Naive thymus-derived CD4-positive, alpha-beta T cell (primary cell): ENCODE measurements at regions of chr16 and their contacts with region 1.

Region 1: DNA sequence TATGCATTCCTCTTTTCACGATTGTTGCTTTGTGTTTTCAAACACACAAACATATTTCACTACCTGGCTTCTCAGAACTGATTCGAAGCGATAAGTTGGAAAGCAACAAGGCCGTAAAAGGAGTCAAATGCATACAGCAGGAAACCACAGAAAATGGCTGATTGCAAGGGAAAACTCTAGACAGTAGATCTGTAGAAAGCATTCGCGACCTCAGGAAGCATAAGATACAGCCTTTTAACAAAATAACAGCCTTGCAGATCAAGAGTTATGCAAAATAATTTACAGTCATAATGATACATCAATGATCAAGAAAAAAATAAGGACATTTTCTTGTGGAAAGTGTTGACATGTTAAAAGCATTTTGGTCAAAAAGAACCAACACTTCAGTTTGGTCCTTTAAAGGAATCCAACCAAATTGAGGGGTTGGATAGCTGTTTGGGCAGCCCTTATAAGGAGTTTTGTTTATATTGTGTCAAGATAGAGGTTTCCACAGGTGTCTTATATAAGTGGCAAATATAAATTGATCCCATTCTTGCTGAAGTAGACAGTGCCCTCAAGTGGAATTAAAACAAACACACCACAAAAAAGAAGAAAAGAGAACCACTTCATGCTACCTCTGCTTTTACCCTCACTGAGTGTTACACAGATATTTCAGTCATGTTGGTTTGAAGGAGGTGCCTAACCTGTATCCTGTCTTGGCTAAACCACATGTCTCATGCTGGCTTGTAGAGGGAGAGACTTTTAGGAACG is 5.5 kb downstream of the CYLD start:
- DNase-seq: peak in 7 of 9 donors; percentile 52 to 80 (median 73)
- ATAC-seq: peak; percentile 87
- H3K4me3 ChIP-seq: peak overlapping the region; percentile 33
- H3K4me3 Mint-ChIP-seq: peak overlapping the region; percentile 74 to 99 (median 94)
- H3K27ac ChIP-seq: peak overlapping the region; percentile 100
- H3K27ac Mint-ChIP-seq: peak overlapping the region; percentile 85 to 98 (median 93)
- H3K4me1 ChIP-seq: peaks cover 30 to 66% of the 10 kb centered on the region in 2 donors
- H3K4me1 Mint-ChIP-seq: peaks cover 34 to 78% (median 69%) of the 10 kb centered on the region in 7 donors
- H3K27me3 ChIP-seq: no peaks in the 10 kb centered on the region
- H3K27me3 Mint-ChIP-seq: no peaks in the 10 kb centered on the region

Region 2: DNA sequence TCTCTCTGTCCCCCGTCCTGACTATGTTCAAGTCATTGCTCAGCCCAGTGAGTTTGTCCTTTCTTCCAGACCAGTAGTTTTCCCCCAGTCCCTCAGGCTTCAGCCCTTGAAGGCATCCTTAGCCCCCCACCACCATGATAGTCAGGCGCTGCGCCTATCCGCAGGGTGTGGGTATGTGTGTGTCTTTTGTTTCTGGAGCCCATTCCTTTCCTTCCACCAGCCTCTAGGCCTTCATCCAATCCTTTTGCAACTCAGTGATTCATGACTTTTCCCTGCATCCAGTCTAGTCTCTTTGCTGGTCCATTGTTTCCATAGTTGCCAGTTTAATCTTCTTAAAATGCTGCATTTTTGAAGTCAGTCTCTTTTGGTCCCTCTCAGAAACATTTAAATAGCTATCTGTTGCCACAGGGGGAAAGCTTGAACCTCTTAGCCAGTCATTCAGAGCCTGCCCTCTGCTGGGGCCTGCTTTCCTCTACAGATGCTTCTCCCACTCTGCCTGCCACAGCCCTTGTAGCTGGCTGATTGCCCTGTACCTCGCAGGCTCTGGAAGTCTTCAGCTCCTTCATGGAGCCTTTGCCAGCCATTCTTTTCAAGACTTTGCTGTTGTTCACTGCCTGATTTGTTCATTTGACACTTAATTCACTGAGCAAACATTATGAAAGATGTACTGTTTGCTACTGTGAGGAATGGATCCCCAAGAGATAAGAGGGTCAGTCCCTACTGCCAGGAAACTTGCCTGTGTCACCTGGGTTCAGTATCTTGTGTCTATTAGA is 536.9 kb before region 1 on chr16:
- CTCF ChIA-PET with region 1: no interaction called
- POLR2A ChIA-PET with region 1: no interaction called
- intact Hi-C with region 1: loop called (anchors 1 kb)
- DNase-seq: peak; percentile 25 to 73 (median 61)
- ATAC-seq: peak; percentile 93
- H3K4me3 ChIP-seq: no peak overlapping the region
- H3K4me3 Mint-ChIP-seq: no peak overlapping the region
- H3K27ac ChIP-seq: no peak overlapping the region
- H3K27ac Mint-ChIP-seq: peak overlapping the region; percentile 48 to 90 (median 83)
- H3K4me1 ChIP-seq: no peaks in the 10 kb centered on the region
- H3K4me1 Mint-ChIP-seq: peaks cover 17 to 50% (median 38%) of the 10 kb centered on the region in 7 donors
- H3K27me3 ChIP-seq: no peaks in the 10 kb centered on the region
- H3K27me3 Mint-ChIP-seq: no peaks in the 10 kb centered on the region

Region 3: DNA sequence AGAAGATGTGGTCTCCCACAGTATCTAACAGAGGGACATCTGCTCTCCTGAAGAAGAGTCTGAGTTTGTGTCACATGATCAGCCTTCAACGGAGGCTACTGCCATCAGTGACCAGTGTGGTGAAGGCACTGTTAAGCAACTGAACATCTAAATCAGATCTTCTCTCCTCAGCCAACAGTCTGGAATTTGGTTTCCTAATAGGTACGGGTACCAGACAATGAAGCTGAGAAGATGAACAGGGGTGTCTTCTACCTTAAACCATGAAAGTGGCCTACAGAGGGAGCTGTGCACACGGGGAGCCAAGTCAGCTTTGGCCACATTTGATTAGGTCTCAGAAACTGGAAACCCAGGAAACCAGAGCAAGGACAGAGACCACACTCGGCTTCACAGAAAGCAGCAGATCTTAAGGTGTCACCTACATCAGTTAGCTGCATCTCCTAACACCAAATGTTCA is 420.4 kb before region 1 on chr16:
- CTCF ChIA-PET with region 1: interaction called, 3 read pairs
- POLR2A ChIA-PET with region 1: interaction called, 4 read pairs
- intact Hi-C with region 1: loop called (anchors 1 kb)
- DNase-seq: peak in 8 of 9 donors; percentile 53 to 89 (median 78)
- ATAC-seq: peak; percentile 97
- H3K4me3 ChIP-seq: no peak overlapping the region
- H3K4me3 Mint-ChIP-seq: peak overlapping the region in 8 of 10 donors; percentile 8 to 57 (median 26)
- H3K27ac ChIP-seq: peak overlapping the region; percentile 44
- H3K27ac Mint-ChIP-seq: peak overlapping the region; percentile 54 to 94 (median 81)
- H3K4me1 ChIP-seq: peaks cover 10 to 34% of the 10 kb centered on the region in 2 donors
- H3K4me1 Mint-ChIP-seq: peaks cover 37 to 62% (median 49%) of the 10 kb centered on the region in 7 donors
- H3K27me3 ChIP-seq: no peaks in the 10 kb centered on the region
- H3K27me3 Mint-ChIP-seq: no peaks in the 10 kb centered on the region

Region 4: GRCh38 chr16:50665128-50665878 is 82.1 kb before region 1 on chr16:
- CTCF ChIA-PET with region 1: interaction called, 225 read pairs
- POLR2A ChIA-PET with region 1: interaction called, 53 read pairs
- intact Hi-C with region 1: loop called (anchors 1 kb)
- DNase-seq: peak; percentile 71 to 90 (median 77)
- ATAC-seq: peak; percentile 80
- H3K4me3 ChIP-seq: peak overlapping the region; percentile 60
- H3K4me3 Mint-ChIP-seq: peak overlapping the region; percentile 73 to 87 (median 84)
- H3K27ac ChIP-seq: peak overlapping the region; percentile 62
- H3K27ac Mint-ChIP-seq: peak overlapping the region; percentile 82 to 97 (median 89)
- H3K4me1 ChIP-seq: peaks cover 17% of the 10 kb centered on the region in 2 donors
- H3K4me1 Mint-ChIP-seq: peaks cover 28 to 49% (median 44%) of the 10 kb centered on the region in 7 donors
- H3K27me3 ChIP-seq: no peaks in the 10 kb centered on the region
- H3K27me3 Mint-ChIP-seq: no peaks in the 10 kb centered on the region

Region 5: GRCh38 chr16:50719518-50720337 is 27.7 kb before region 1 on chr16:
- CTCF ChIA-PET with region 1: interaction called, 33 read pairs
- POLR2A ChIA-PET with region 1: interaction called, 20 read pairs
- intact Hi-C with region 1: loop called in 1 of 2 experiments (anchors 1 kb)
- DNase-seq: peak in 3 of 9 donors; percentile 31 to 40 (median 35)
- ATAC-seq: peak; percentile 38
- H3K4me3 ChIP-seq: no peak overlapping the region
- H3K4me3 Mint-ChIP-seq: peak overlapping the region in 4 of 10 donors; percentile 18 to 71 (median 41)
- H3K27ac ChIP-seq: no peak overlapping the region
- H3K27ac Mint-ChIP-seq: peak overlapping the region in 6 of 9 donors; percentile 41 to 71 (median 54)
- H3K4me1 ChIP-seq: peaks cover 16 to 22% of the 10 kb centered on the region in 2 donors
- H3K4me1 Mint-ChIP-seq: peaks cover 34 to 54% (median 42%) of the 10 kb centered on the region in 7 donors
- H3K27me3 ChIP-seq: no peaks in the 10 kb centered on the region
- H3K27me3 Mint-ChIP-seq: no peaks in the 10 kb centered on the region

Region 6: GRCh38 chr16:50781043-50781442 is 33.7 kb after region 1 on chr16:
- CTCF ChIA-PET with region 1: interaction called, 3 read pairs
- POLR2A ChIA-PET with region 1: interaction called, 4 read pairs
- intact Hi-C with region 1: loop called (anchors 5 kb)
- DNase-seq: peak in 3 of 9 donors; percentile 10 to 31 (median 26)
- ATAC-seq: peak; percentile 77
- H3K4me3 ChIP-seq: no peak overlapping the region
- H3K4me3 Mint-ChIP-seq: peak overlapping the region in 9 of 10 donors; percentile 37 to 73 (median 51)
- H3K27ac ChIP-seq: no peak overlapping the region
- H3K27ac Mint-ChIP-seq: peak overlapping the region; percentile 63 to 94 (median 88)
- H3K4me1 ChIP-seq: peaks cover 5 to 29% of the 10 kb centered on the region in 2 donors
- H3K4me1 Mint-ChIP-seq: peaks cover 21 to 71% (median 65%) of the 10 kb centered on the region in 7 donors
- H3K27me3 ChIP-seq: no peaks in the 10 kb centered on the region
- H3K27me3 Mint-ChIP-seq: no peaks in the 10 kb centered on the region